Colonic mucosa (tissue), 4 donors: ENCODE measurements at regions of chr11 and their contacts with region 1.

Region 1: GRCh38 chr11:116835791-116836631 is 1.4 kb downstream of the APOA1 start:
- DNase-seq: peak; percentile 87
- H3K4me3 ChIP-seq: peak overlapping the region; percentile 31
- H3K27ac ChIP-seq: peak overlapping the region; percentile 44
- H3K4me1 ChIP-seq: peaks cover 5% of the 10 kb centered on the region
- H3K27me3 ChIP-seq: no peaks in the 10 kb centered on the region
- CTCF ChIP-seq: peak; percentile 29

Region 2: GRCh38 chr11:116791002-116791812 is 44.8 kb before region 1 on chr11:
- intact Hi-C with region 1: loop called (anchors 5 kb)
- DNase-seq: peak; percentile 77
- H3K4me3 ChIP-seq: no peak overlapping the region
- H3K27ac ChIP-seq: no peak overlapping the region
- H3K4me1 ChIP-seq: peaks cover 6% of the 10 kb centered on the region
- H3K27me3 ChIP-seq: no peaks in the 10 kb centered on the region
- CTCF ChIP-seq: peak; percentile 89

Region 3: GRCh38 chr11:116895048-116895757 is 59.2 kb after region 1 on chr11:
- intact Hi-C with region 1: no loop called
- DNase-seq: no peak
- H3K4me3 ChIP-seq: no peak overlapping the region
- H3K27ac ChIP-seq: no peak overlapping the region
- H3K4me1 ChIP-seq: no peaks in the 10 kb centered on the region
- H3K27me3 ChIP-seq: no peaks in the 10 kb centered on the region
- CTCF ChIP-seq: no peak

Region 4: GRCh38 chr11:117058761-117059261 is 222.8 kb after region 1 on chr11:
- intact Hi-C with region 1: no loop called
- DNase-seq: no peak
- H3K4me3 ChIP-seq: no peak overlapping the region
- H3K27ac ChIP-seq: no peak overlapping the region
- H3K4me1 ChIP-seq: no peaks in the 10 kb centered on the region
- H3K27me3 ChIP-seq: no peaks in the 10 kb centered on the region
- CTCF ChIP-seq: no peak

Region 5: GRCh38 chr11:117098269-117099232 is 262.5 kb after region 1 on chr11 and contains the start of gene SIK3:
- intact Hi-C with region 1: no loop called
- DNase-seq: peak; percentile 93
- H3K4me3 ChIP-seq: peak within 1 kb of the TSS; percentile 73
- H3K27ac ChIP-seq: peak within 1 kb of the TSS; percentile 81
- H3K4me1 ChIP-seq: peaks cover 17% of the 10 kb centered on the region
- H3K27me3 ChIP-seq: no peaks in the 10 kb centered on the region
- CTCF ChIP-seq: no peak
- total RNA-seq, gene SIK3: 26.7 to 28.0 TPM